Adrenal gland (tissue), 19 donors: ENCODE measurements at regions of chr9 and their contacts with region 1.

Region 1: GRCh38 chr9:94783102-94783664 is 56.7 kb downstream of the AOPEP start:
- DNase-seq: peak; percentile 81 to 96 (median 94)
- H3K4me3 ChIP-seq: no peak overlapping the region
- H3K27ac ChIP-seq: peak overlapping the region in 1 of 5 donors; percentile 46
- H3K4me1 ChIP-seq: peaks cover 0 to 8% of the 10 kb centered on the region in 2 donors
- H3K27me3 ChIP-seq: no peaks in the 10 kb centered on the region
- CTCF ChIP-seq: peak; percentile 34 to 82 (median 72)
- POLR2A ChIP-seq: no peak

Region 2: GRCh38 chr9:94681508-94681907 is 101.7 kb before region 1 on chr9:
- intact Hi-C with region 1: loop called in 1 of 2 experiments (anchors 5 kb)
- DNase-seq: peak; percentile 75 to 93 (median 89)
- H3K4me3 ChIP-seq: no peak overlapping the region
- H3K27ac ChIP-seq: peak overlapping the region in 1 of 5 donors; percentile 23
- H3K4me1 ChIP-seq: no peaks in the 10 kb centered on the region
- H3K27me3 ChIP-seq: no peaks in the 10 kb centered on the region
- CTCF ChIP-seq: peak; percentile 44 to 91 (median 81)
- POLR2A ChIP-seq: no peak

Region 3: DNA sequence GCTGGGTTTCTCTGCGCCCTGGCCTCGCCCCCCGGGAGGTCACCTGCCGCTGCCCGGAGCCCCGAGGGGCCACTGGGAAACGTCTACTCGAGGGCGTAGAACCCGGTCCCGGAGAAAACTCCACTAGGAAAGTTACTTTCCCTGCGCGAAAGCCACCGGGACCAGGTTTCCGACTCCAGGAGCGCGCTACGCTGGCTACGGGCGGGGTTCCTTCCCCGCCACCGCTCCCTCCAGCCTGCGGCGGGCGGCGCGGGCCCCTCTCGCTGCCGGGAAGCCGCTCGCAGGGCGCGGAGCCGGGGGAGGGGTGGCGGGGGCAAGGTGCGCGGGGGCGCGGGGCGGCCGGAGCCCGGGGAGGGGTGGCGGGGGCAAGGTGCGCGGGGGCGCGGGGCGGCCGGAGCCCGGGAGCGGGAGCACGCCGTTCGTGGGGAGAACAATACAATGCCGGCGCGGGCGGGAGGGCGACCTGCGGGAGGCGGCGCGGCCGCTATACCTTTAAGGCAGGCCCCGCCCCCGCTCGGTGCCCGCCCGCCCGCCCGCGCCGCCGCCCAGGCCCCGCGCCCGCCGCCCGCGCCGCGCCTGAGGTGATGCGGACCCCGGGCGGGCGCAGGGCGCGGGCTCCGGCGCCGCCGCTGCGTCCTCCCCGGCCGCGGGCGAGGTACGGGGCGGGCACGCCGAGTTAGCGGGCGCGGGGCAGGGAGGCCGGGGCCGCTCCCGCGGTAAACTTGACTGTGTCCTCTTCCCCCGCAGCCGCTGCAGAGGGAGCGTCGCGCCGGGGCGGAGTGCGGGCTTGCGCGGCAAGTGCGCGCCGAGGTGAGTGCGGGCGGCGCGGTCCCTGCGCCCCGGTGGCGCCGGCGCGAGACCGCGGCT is 221.5 kb after region 1 on chr9:
- intact Hi-C with region 1: loop called in 1 of 2 experiments (anchors 10 kb)
- DNase-seq: peak in 6 of 7 donors; percentile 66 to 75 (median 71)
- H3K4me3 ChIP-seq: peak overlapping the region in 3 of 4 donors; percentile 16 to 95 (median 62)
- H3K27ac ChIP-seq: peak overlapping the region; percentile 72 to 99 (median 95)
- H3K4me1 ChIP-seq: peaks cover 31 to 48% of the 10 kb centered on the region in 2 donors
- H3K27me3 ChIP-seq: no peaks in the 10 kb centered on the region
- CTCF ChIP-seq: no peak
- POLR2A ChIP-seq: peak in 1 of 2 donors; percentile 61

Region 4: GRCh38 chr9:95595721-95596295 is 812.6 kb after region 1 on chr9:
- intact Hi-C with region 1: no loop called
- DNase-seq: no peak
- H3K4me3 ChIP-seq: no peak overlapping the region
- H3K27ac ChIP-seq: no peak overlapping the region
- H3K4me1 ChIP-seq: no peaks in the 10 kb centered on the region
- H3K27me3 ChIP-seq: no peaks in the 10 kb centered on the region
- CTCF ChIP-seq: no peak
- POLR2A ChIP-seq: no peak